Ascending aorta (tissue), 2 donors: ENCODE measurements at regions of chr19 and their contacts with region 1.

Region 1: DNA sequence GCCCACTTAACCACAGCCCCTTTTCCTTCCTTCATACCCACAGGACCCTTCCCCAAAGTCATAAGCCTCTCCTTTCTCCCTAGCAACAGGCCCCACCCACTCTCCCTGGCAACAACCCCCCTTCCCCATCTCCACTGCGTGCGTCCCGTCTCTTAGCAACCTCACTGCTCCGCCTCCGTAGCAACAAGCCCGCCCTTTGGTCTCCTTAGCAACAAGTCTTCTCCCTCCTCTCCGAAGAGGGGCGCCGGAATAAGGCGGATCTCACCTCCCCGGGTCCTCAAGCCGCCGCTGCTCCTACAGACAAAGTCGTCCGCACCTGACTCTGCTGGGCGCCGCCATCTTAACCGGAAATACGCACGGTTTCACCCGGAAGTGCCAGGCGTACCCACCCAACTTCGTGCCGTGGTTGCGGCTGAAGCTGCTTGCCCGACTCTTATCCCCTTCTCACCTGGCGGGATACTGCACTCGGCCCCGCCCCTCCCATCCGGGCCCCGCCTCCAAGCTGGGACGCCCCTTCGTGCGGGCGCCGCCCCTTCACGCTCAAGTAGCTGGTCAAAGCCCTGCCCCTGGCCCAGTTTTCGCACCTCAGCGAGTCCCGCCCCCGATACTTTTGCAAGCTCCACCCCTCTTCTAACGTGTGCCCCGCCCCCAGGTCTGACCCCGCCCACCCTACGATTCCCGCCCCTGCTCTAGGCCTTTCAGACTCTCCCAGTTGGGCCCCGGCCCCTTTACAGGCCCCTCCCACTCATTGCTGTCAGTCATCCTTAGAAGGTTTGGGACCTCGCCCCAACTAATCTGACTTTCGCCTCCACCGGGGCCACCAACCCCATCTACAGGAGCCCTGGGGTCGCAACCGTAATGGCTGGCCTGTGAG is at the start of gene HSPBP1:
- DNase-seq: peak; percentile 85 to 97
- H3K4me3 ChIP-seq: peak within 1 kb of the TSS; percentile 71 to 84
- H3K27ac ChIP-seq: peak within 1 kb of the TSS; percentile 66 to 68
- H3K4me1 ChIP-seq: peaks cover 11 to 16% of the 10 kb centered on the region in 2 donors
- H3K27me3 ChIP-seq: no peaks in the 10 kb centered on the region
- CTCF ChIP-seq: no peak
- total RNA-seq, gene HSPBP1: 72.7 TPM

Region 2: GRCh38 chr19:54017261-54017660 is 1262.7 kb before region 1 on chr19:
- intact Hi-C with region 1: no loop called
- DNase-seq: no peak
- H3K4me3 ChIP-seq: no peak overlapping the region
- H3K27ac ChIP-seq: no peak overlapping the region
- H3K4me1 ChIP-seq: no peaks in the 10 kb centered on the region
- H3K27me3 ChIP-seq: no peaks in the 10 kb centered on the region
- CTCF ChIP-seq: no peak

Region 3: GRCh38 chr19:55258828-55259539 is 21.0 kb before region 1 on chr19 and contains the start of gene PPP6R1:
- intact Hi-C with region 1: loop called (anchors 1 kb)
- DNase-seq: peak; percentile 92 to 99
- H3K4me3 ChIP-seq: peak within 1 kb of the TSS; percentile 85 to 87
- H3K27ac ChIP-seq: peak within 1 kb of the TSS; percentile 84 to 88
- H3K4me1 ChIP-seq: peaks cover 8 to 24% of the 10 kb centered on the region in 2 donors
- H3K27me3 ChIP-seq: no peaks in the 10 kb centered on the region
- CTCF ChIP-seq: peak in 1 of 3 experiments; percentile 15
- total RNA-seq, gene PPP6R1: 68.3 TPM

Region 4: GRCh38 chr19:55476100-55476775 is 196.2 kb after region 1 on chr19 and contains the start of gene ZNF628:
- intact Hi-C with region 1: loop called (anchors 5 kb)
- DNase-seq: peak; percentile 93 to 99
- H3K4me3 ChIP-seq: peak within 1 kb of the TSS; percentile 82 to 84
- H3K27ac ChIP-seq: peak within 1 kb of the TSS; percentile 95 to 99
- H3K4me1 ChIP-seq: peaks cover 8 to 11% of the 10 kb centered on the region in 2 donors
- H3K27me3 ChIP-seq: no peaks in the 10 kb centered on the region
- CTCF ChIP-seq: no peak
- total RNA-seq, gene ZNF628: 13.2 TPM

Region 5: GRCh38 chr19:56314562-56315077 is 1034.6 kb after region 1 on chr19 and contains the start of gene ZSCAN5A:
- intact Hi-C with region 1: no loop called
- DNase-seq: peak; percentile 87 to 98
- H3K4me3 ChIP-seq: peak within 1 kb of the TSS; percentile 72 to 86
- H3K27ac ChIP-seq: peak within 1 kb of the TSS; percentile 91 to 98
- H3K4me1 ChIP-seq: peaks cover 0 to 6% of the 10 kb centered on the region in 2 donors
- H3K27me3 ChIP-seq: no peaks in the 10 kb centered on the region
- CTCF ChIP-seq: no peak
- total RNA-seq, gene ZSCAN5A: 13.3 TPM